ENCODE measurements at regions of chr20 and their contacts with region 1.

Region 1: DNA sequence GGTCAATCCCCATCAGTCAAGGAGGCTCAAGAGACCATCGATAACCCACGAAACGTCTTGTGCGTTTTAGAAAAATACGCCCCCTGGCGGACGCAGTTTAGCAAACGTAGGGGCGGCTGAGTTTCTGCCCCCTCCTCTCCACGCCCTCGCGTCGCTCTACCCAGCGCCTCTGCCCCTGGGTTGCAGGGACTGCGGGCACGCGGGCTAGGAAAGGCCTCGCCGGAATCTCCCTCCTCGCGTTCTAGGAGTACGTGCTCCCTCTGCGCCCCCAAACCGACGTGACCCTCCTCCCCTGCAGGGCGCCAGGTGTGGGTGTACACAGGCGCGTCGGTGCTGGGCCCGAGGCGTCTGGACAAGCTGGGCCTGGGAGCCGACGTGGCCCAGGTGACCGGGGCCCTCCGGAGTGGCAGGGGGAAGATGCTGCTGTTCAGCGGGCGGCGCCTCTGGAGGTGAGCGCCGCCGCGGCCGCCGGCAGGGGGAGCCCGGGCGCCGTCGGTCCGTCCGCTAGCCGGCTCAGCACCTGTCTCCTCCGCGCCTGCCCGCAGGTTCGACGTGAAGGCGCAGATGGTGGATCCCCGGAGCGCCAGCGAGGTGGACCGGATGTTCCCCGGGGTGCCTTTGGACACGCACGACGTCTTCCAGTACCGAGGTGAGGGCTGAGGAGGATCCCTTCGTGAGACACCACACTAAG is 5.3 kb downstream of the MMP9 start:
- DNase-seq: peak; percentile 47
- ATAC-seq: peak; percentile 88
- H3K4me3 ChIP-seq: peak overlapping the region in 2 of 3 experiments; percentile 6 to 64; a peak in 4 of 6 replicates
- H3K27ac ChIP-seq: no peak overlapping the region
- H3K4me1 ChIP-seq: peaks cover 57% of the 10 kb centered on the region
- H3K27me3 ChIP-seq: peaks cover 28 to 50% of the 10 kb centered on the region in 2 experiments; a peak in 4 of 5 replicates
- CTCF ChIP-seq: peak; percentile 82
- EP300 ChIP-seq: no peak
- POLR2A ChIP-seq: no peak
- RAD21 ChIP-seq: peak; percentile 98

Region 2: DNA sequence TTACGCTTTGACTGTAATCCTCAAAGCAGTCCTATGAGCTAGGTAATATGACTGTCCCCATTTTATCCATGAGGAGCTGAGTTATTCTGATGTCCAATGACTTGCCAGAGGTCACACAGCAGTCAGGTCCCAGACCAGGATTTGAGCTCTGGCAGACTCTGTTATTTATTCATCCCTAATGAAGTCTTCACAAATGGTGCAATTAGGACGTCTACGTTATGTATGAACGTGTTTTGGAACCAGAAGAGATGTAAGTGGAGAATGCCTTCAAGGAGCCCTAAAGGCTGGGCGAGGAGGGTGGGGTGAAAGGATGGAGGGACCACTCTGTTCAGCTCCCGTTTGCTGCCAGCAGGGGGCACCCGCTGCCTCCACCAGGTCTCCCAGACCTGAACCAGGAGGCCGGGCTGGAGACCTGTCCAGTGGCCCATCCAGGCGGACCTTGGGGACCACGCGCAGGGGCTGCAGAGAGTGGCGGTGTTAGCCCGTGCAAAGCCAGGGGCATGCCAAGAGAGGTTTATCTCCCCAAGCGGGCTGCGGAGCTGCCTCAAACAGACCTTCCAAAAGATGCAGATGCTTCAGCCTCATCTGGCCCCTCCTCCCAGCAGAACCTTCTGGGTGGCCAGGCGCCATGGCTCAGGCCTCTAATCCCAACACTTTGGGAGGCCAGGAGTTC is 26.7 kb before region 1 on chr20:
- CTCF ChIA-PET with region 1: interaction called, 15 read pairs
- POLR2A ChIA-PET with region 1: no interaction called
- in situ Hi-C with region 1: no loop called
- intact Hi-C with region 1: no loop called
- DNase-seq: peak; percentile 73
- ATAC-seq: peak; percentile 96
- H3K4me3 ChIP-seq: no peak overlapping the region
- H3K27ac ChIP-seq: no peak overlapping the region
- H3K4me1 ChIP-seq: no peaks in the 10 kb centered on the region
- H3K27me3 ChIP-seq: peaks cover 0 to 13% of the 10 kb centered on the region in 2 experiments; a peak in 2 of 5 replicates
- CTCF ChIP-seq: peak; percentile 94
- EP300 ChIP-seq: no peak
- POLR2A ChIP-seq: no peak
- RAD21 ChIP-seq: peak; percentile 80

Region 3: DNA sequence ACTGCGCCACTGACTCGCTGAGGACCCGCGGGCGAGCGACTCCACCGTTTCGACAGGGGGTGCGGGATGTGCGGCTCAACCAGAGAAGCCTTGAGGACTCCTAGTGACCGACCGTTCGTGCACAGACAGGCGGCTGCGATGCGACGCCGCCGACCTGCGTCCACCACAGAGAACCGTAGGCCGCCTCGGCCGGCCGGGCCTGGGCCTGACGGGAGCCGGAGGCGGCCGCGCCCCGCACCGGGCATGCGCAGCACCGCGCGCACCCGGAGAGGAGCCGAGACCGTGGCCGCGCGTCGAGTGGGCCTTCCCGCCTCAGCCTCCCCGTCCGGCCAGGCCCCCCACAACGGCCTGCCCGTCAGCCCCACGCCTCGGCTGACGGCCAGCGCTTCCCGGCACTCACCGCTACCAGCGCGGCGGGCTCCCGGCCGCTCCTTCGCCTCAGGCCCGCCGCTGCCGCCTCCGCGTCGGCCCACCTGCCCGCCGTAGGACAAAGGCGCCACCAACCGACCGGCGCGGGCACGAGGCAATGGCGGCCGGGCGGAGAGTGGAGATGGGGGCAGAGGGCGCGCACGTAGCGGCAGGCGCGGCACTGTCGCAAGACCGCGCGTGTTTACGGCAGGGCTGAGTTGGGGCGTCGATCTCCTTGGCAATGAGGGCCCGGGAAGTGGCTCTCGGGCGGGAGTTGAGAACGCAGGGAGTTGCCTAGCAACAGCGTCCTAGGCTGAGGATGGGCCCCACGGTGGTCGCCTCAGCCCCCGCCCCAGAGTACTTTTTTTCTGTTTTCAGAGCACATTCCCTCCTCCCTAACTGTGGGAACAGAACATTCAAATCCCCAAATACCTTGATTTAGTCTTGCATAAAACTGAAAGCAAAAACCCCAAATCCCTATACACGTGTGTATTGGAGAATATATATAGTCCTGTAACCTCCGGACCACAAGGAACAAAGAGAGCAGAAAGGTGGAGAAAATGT is 75.7 kb after region 1 on chr20 and contains the start of gene NCOA5:
- CTCF ChIA-PET with region 1: interaction called, 27 read pairs
- POLR2A ChIA-PET with region 1: interaction called, 6 read pairs
- in situ Hi-C with region 1: no loop called
- intact Hi-C with region 1: loop called (anchors 2 kb)
- DNase-seq: peak; percentile 95
- ATAC-seq: peak; percentile 93
- H3K4me3 ChIP-seq: peak within 1 kb of the TSS; percentile 70 to 98 (median 92)
- H3K27ac ChIP-seq: peak within 1 kb of the TSS; percentile 92
- H3K4me1 ChIP-seq: peaks cover 45% of the 10 kb centered on the region
- H3K27me3 ChIP-seq: no peaks in the 10 kb centered on the region; a peak in 1 of 5 replicates
- CTCF ChIP-seq: peak; percentile 91
- EP300 ChIP-seq: peak; percentile 14 to 40; a peak in 2 of 4 replicates
- POLR2A ChIP-seq: peak; percentile 94 to 96
- RAD21 ChIP-seq: peak; percentile 89
- total RNA-seq, gene NCOA5: 28.4 and 37.7 TPM in 2 replicates

Region 4: GRCh38 chr20:46174469-46175128 is 160.6 kb after region 1 on chr20:
- CTCF ChIA-PET with region 1: interaction called, 13 read pairs
- POLR2A ChIA-PET with region 1: no interaction called
- in situ Hi-C with region 1: no loop called
- intact Hi-C with region 1: no loop called
- DNase-seq: peak; percentile 57
- ATAC-seq: peak; percentile 90
- H3K4me3 ChIP-seq: no peak overlapping the region; a peak in 1 of 6 replicates
- H3K27ac ChIP-seq: no peak overlapping the region
- H3K4me1 ChIP-seq: no peaks in the 10 kb centered on the region
- H3K27me3 ChIP-seq: peaks cover 12 to 82% of the 10 kb centered on the region in 2 experiments; a peak in 4 of 5 replicates
- CTCF ChIP-seq: peak; percentile 87
- EP300 ChIP-seq: no peak
- POLR2A ChIP-seq: no peak
- RAD21 ChIP-seq: peak; percentile 89